Mammary epithelial cell (primary cell): ENCODE measurements at regions of chr1 and their contacts with region 1.

Region 1: DNA sequence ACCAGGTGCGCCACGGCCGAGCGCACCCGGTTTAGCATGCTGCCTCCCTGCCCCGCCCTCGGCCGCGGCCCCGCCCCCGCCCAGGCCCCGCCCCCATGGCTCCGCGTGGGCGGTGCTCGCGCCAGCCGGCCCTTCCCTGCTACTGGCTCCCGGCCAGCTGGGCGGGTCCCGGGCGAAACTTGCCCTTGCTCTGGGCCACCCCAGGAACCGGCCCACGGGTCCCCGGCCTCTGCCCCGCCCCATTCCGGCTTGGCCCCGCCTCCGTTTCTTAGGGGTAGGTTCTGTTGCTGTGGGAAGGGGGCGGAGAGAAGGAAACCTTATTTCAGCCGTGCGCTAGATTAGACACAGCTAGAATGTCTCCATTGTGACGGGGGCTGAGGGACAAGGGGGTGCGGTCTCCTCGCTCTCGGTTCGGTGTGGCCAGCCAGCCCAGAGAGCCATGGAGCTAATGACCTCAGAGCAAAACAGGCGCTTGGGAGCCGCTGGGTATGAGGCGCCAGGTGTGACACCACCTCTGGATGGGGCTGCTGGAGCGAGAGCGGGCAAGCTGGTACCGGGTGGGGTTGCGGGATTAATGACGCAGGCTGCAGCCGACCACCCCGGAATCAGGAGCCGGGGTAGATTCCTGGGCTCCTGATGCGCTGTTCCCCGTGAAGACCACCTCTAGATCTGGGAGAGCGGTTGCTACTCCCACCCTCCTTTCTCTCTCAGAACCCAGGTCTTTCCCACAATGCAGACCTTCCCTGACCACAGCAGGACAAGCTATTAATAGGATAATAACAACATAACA is at the start of gene PPM1J:
- DNase-seq: peak; percentile 96
- H3K4me3 ChIP-seq: peak within 1 kb of the TSS; percentile 71 to 73 (median 72)
- H3K27ac ChIP-seq: peak within 1 kb of the TSS; percentile 76
- H3K4me1 ChIP-seq: peaks cover 22% of the 10 kb centered on the region
- H3K27me3 ChIP-seq: no peaks in the 10 kb centered on the region
- CTCF ChIP-seq: no peak
- total RNA-seq, gene PPM1J: 6.2 to 9.4 TPM

Region 2: GRCh38 chr1:112390775-112391602 is 324.5 kb before region 1 on chr1:
- CTCF ChIA-PET with region 1: interaction called, 14 read pairs
- dilution Hi-C with region 1: no loop called
- in situ Hi-C with region 1: no loop called
- intact Hi-C with region 1: loop called (anchors 2 kb)
- DNase-seq: peak; percentile 88
- H3K4me3 ChIP-seq: peak overlapping the region; percentile 38 to 50 (median 41)
- H3K27ac ChIP-seq: peak overlapping the region; percentile 52
- H3K4me1 ChIP-seq: peaks cover 39% of the 10 kb centered on the region
- H3K27me3 ChIP-seq: no peaks in the 10 kb centered on the region
- CTCF ChIP-seq: peak; percentile 90 to 93

Region 3: DNA sequence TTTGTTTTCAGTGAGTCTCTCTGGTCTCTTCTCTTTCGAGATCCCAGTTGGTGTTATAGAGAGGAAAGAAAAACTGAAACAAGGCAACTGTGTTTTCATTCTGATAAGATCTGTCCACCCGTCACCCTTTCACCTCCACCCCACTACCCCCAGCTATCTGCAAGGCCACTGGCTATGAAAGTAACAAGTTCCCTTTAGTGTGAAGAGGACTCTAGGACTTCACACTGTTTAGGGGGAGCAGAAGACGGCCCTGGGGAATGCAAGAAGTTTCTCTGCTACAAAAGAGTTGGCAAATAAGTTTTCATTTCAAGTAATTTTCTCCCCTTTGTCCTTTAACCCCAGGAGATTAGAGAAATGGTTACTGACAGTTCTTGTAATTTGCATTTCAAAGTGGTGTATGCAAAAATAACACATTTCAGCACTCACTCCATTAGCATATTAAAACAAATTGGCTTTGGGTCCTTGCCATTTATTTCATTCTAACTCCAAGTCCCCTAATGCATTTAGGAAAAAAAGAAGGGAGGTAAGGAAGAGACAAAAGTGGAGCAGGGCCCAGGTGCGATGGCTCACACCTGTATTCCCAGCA is 79.3 kb after region 1 on chr1:
- CTCF ChIA-PET with region 1: no interaction called
- dilution Hi-C with region 1: loop called (anchors 5 kb)
- in situ Hi-C with region 1: no loop called
- intact Hi-C with region 1: no loop called
- DNase-seq: no peak
- H3K4me3 ChIP-seq: no peak overlapping the region
- H3K27ac ChIP-seq: no peak overlapping the region
- H3K4me1 ChIP-seq: peaks cover 7% of the 10 kb centered on the region
- H3K27me3 ChIP-seq: no peaks in the 10 kb centered on the region
- CTCF ChIP-seq: no peak

Region 4: DNA sequence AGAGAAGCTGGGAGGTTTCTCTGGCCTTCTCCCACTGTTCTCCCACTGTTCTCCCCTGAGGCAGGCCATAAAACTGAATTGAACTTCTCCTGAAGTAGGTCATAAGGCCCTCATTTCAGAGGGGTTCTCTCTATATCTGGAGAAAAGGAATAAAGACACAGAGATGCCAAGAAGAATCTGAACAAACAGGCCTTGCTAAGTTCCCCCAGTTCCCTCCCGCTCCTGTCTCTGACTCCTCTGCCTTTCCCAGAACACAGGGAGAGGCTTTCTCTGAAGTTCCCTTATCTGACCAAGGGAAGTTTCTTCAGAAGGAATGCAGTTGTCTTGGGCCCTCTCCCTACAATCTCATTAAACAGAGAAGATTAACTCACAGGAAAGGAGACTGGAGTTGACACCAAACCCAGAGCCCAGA is 157.1 kb after region 1 on chr1:
- CTCF ChIA-PET with region 1: no interaction called
- dilution Hi-C with region 1: loop called (anchors 5 kb)
- in situ Hi-C with region 1: no loop called
- intact Hi-C with region 1: loop called (anchors 1 kb)
- DNase-seq: no peak
- H3K4me3 ChIP-seq: no peak overlapping the region
- H3K27ac ChIP-seq: no peak overlapping the region
- H3K4me1 ChIP-seq: peaks cover 18% of the 10 kb centered on the region
- H3K27me3 ChIP-seq: no peaks in the 10 kb centered on the region
- CTCF ChIP-seq: no peak

Region 5: DNA sequence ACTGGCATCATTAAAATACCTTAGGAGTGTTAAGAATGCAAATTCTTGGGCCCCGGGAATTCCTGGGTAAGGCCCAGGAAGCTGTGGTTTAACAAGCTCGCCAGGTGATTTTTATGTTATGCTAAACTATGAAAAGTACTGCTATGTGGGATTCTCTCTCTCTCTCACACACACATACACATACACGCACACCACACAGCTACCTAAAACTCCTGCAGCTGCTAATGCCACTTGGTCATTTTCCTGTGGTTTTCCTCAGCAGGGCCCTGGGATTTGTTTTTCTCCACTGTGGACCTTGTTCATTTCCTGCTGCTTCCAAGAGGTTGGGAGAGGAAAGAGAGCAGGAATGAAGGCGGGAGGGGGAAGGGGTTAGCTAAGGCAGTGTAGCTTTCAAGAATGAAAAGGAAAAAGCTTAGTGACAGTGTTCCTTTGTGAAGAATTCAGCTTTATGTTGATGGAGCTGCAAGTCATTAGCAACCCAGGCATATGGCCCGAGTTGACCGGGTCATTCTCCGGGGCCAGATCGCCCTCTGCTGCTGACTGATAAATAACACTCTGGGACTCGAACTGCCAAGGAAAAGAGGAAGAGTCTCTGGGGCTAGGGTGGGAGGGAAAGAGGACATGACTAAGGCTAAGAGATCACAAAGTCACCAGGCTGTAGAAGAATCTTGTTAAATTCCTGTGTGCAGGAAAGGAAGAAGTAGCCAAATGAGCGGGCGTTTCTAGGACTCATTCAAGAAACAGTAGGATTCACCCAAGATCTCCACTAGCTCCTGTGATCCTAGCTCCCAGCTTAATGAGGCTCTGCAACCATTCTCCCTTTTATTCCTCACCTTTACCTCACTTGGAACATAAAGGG is 327.1 kb after region 1 on chr1:
- CTCF ChIA-PET with region 1: interaction called, 4 read pairs
- dilution Hi-C with region 1: loop called (anchors 5 kb)
- in situ Hi-C with region 1: no loop called
- intact Hi-C with region 1: loop called (anchors 1 kb)
- DNase-seq: peak; percentile 84
- H3K4me3 ChIP-seq: no peak overlapping the region
- H3K27ac ChIP-seq: peak overlapping the region; percentile 79
- H3K4me1 ChIP-seq: peaks cover 31% of the 10 kb centered on the region
- H3K27me3 ChIP-seq: no peaks in the 10 kb centered on the region
- CTCF ChIP-seq: peak; percentile 41 to 71

Region 6: GRCh38 chr1:113677250-113678158 is 962.0 kb after region 1 on chr1:
- CTCF ChIA-PET with region 1: no interaction called
- dilution Hi-C with region 1: no loop called
- in situ Hi-C with region 1: no loop called
- intact Hi-C with region 1: loop called (anchors 5 kb)
- DNase-seq: peak; percentile 11
- H3K4me3 ChIP-seq: no peak overlapping the region
- H3K27ac ChIP-seq: no peak overlapping the region
- H3K4me1 ChIP-seq: no peaks in the 10 kb centered on the region
- H3K27me3 ChIP-seq: no peaks in the 10 kb centered on the region
- CTCF ChIP-seq: peak; percentile 31 to 55